GM18951 (cell line): ENCODE measurements at regions of chr18 and their contacts with region 1.

Region 1: DNA sequence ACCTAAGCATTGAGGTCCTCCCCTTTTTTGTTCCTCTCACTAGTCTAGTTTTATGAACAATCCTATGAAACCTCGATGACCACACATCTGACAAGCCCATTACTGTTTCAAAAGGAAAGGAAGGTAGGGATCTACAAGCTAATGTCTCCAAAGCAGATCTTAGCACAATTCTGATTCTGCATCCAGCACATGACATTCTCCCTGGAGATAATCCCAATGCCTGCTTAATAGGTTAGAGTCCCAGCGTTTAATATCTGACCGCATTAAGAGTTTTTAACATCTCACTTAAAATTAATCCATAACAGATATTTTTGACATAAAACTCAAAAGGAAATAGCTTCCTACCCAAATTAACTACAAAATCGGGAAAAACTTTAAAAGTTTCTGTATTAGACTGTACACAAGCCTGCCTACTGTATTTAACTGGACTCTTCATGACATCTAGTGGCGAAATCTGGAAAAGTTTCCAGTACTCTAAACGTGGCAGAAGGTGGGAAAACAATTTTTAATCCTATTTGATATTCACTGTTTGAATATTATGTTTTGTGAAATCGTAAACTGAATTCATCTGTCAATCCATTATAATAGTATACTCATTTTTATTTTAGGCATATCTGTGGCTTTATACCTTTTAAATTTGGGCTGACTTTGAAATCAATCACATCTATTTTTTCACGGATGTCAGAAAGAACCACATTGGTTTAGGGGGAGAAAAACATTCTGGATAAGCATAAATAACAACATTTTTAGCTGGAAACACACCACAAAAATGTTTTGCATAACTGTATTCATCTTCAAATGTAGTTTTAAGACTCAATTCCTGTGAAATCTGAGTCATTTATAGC is 62.4 kb downstream of the TXNL1 start:
- POLR2A ChIP-seq: no peak

Region 2: GRCh38 chr18:54679318-54680149 is 1896.5 kb before region 1 on chr18:
- in situ Hi-C with region 1: no loop called
- POLR2A ChIP-seq: no peak

Region 3: GRCh38 chr18:55781481-55781957 is 794.5 kb before region 1 on chr18:
- in situ Hi-C with region 1: loop called (anchors 25 kb)
- POLR2A ChIP-seq: no peak